A673 (cell line): ENCODE measurements at regions of chr14 and their contacts with region 1.

Region 1: DNA sequence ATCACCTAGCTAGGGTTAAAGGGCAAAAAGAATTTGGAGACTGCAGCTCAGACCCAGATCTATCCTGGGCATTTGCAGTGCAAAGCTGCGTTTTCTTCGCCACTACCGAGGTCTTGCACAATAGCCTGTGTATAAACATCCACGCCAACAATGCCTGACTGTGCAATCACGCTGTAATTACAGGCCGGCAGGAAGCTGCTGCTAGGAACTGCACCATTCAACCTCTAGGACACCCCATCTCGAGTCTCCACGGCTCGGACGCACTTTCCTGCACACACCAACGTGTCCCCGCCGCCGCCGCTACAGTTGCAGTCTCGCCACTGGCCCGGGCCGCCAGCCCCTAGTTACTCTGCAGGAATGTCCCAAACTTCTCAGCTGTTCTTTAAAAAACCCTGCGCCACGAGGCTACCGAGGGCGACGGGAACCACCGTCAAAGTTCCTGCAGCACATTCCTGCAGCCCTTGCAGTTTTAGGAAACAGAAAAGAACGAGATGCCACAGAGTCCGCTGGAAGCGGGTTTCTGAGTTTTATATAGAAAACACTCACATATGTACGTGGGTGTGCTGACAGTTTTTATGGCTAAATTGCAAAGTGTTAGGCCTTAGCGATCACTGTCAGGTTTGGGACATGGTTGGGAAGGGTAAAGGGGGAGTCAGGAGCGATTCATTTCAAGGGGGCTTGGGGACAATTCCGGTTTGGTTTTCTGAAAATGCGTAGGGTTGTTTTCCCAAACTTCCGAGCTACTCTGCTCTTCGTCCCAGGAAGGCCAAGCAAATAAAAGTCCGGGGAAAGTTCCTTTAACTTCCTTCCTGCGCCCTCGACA is 65.5 kb upstream of the PTGR2 start:
- DNase-seq: peak; percentile 78
- H3K4me3 ChIP-seq: peak overlapping the region; percentile 72
- H3K27ac ChIP-seq: peak overlapping the region; percentile 86
- H3K4me1 ChIP-seq: peaks cover 36% of the 10 kb centered on the region
- H3K27me3 ChIP-seq: no peaks in the 10 kb centered on the region
- CTCF ChIP-seq: no peak

Region 2: GRCh38 chr14:73771848-73772638 is 14.0 kb before region 1 on chr14:
- CTCF ChIA-PET with region 1: interaction called, 5 read pairs
- POLR2A ChIA-PET with region 1: interaction called, 13 read pairs
- intact Hi-C with region 1: no loop called
- DNase-seq: no peak
- H3K4me3 ChIP-seq: no peak overlapping the region
- H3K27ac ChIP-seq: peak overlapping the region; percentile 11
- H3K4me1 ChIP-seq: peaks cover 12% of the 10 kb centered on the region
- H3K27me3 ChIP-seq: no peaks in the 10 kb centered on the region
- CTCF ChIP-seq: no peak

Region 3: GRCh38 chr14:75002392-75003249 is 1216.5 kb after region 1 on chr14 and contains the start of gene EIF2B2:
- CTCF ChIA-PET with region 1: no interaction called
- POLR2A ChIA-PET with region 1: no interaction called
- intact Hi-C with region 1: no loop called
- DNase-seq: peak; percentile 99
- H3K4me3 ChIP-seq: peak within 1 kb of the TSS; percentile 85
- H3K27ac ChIP-seq: peak within 1 kb of the TSS; percentile 77
- H3K4me1 ChIP-seq: peaks cover 11% of the 10 kb centered on the region
- H3K27me3 ChIP-seq: no peaks in the 10 kb centered on the region
- CTCF ChIP-seq: no peak
- total RNA-seq, gene EIF2B2: 93.3 and 106 TPM in 2 replicates